ENCODE measurements at regions of chr6 and their contacts with region 1.

Region 1: GRCh38 chr6:56787209-56787608 is 144.5 kb upstream of the DST start:
- DNase-seq: no peak
- H3K4me3 ChIP-seq: no peak overlapping the region
- H3K27ac ChIP-seq: no peak overlapping the region
- H3K4me1 ChIP-seq: no peaks in the 10 kb centered on the region
- CTCF ChIP-seq: no peak

Region 2: DNA sequence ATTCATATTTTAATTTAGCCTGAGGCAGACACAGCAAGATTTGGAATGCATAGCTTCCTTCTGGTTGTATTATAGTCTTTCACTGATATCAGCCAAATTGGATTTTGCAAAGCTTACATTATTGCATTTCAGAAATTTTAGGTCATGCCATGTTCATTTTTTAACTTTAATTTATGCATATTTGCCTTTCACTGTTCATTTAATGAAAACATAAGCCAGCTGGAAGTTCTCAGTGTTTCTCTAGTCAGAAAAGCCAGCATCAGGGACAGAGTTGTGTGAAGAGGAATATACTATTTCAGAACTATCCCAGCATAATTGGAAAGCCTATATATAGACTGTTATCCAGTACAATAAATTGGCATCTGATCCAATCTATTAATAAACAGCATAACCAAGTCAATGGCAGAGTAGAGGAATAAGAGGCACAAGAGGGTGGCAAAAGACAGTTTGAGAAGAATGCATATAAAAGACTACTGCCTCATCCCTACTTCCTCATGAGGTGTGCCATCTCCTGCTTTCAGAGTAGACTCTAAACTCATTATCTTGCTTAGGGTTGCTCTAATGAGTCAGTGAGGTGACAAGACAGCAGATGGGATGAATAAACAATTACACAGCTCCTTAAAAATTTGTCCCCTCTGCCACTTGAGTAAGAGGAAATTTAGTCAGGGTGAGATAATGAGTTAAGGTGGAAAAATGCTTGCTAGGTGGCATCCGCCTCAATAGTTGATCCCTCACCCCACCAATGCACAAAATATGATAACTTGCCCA is 1772.7 kb before region 1 on chr6:
- CTCF ChIA-PET with region 1: no interaction called
- POLR2A ChIA-PET with region 1: interaction called, 12 read pairs
- intact Hi-C with region 1: no loop called
- DNase-seq: no peak
- H3K4me3 ChIP-seq: no peak overlapping the region
- H3K27ac ChIP-seq: no peak overlapping the region
- H3K4me1 ChIP-seq: no peaks in the 10 kb centered on the region
- CTCF ChIP-seq: no peak

Measured in OCI-LY7 (cell line).